Activated CD8-positive, alpha-beta memory T cell treated with anti-CD3 and anti-CD28 coated beads, Interleukin-2, amount 10 ng/mL, durations not matched to agents 7 days and 5 days (primary cell): ENCODE measurements at regions of chr2 and their contacts with region 1.

Region 1: GRCh38 chr2:43595603-43596412 is at the start of gene THADA:
- DNase-seq: peak; percentile 100
- ATAC-seq: peak; percentile 98
- H3K4me3 Mint-ChIP-seq: peak within 1 kb of the TSS; percentile 93
- H3K27ac Mint-ChIP-seq: peak within 1 kb of the TSS; percentile 95
- H3K4me1 Mint-ChIP-seq: peaks cover 41% of the 10 kb centered on the region
- H3K27me3 Mint-ChIP-seq: no peaks in the 10 kb centered on the region
- total RNA-seq, gene THADA: 32.0 to 32.1 TPM

Region 2: DNA sequence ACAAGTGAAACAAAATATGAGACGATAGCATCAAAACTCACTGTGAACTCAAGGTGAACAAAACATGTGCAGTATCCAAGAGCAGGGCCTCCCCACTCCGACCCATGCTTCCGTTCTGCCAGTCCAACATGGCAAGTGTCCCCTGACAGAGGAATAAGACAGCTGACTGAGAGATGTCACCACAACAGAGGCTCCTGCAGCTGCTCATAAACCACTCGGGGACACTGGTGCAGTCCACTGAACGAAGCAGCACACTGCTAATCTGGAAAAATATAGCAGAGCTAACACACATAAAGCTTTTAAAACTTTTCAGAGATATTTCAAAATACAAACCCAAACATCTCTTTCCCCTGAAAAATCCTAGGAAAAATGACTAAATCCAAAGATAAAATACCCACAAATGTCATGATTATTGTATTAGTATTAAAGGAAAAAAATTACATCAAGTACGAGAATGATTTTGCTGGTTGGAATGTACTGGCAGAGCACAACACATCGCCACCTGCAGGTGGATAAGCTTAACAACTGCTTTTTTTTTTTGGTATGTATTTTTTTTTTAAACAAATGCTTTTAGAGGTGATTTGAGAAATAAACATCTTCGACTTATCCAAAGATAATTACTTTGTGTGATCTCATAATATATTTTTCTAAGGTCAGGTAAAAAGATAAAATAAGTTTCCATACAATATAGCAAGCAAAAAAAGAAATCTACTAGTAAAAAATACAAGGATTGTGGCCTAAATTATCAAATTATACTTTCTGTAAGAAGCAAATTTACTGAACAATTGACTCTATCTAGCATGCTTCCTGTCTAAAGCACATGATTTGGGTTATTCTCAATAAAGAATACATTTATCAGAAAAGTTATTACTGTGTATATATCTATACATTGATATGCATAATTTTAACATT is 18.6 kb before region 1 on chr2:
- CTCF ChIA-PET with region 1: interaction called, 24 read pairs
- DNase-seq: no peak
- ATAC-seq: no peak
- H3K4me3 Mint-ChIP-seq: no peak overlapping the region
- H3K27ac Mint-ChIP-seq: peak overlapping the region; percentile 24
- H3K4me1 Mint-ChIP-seq: peaks cover 34% of the 10 kb centered on the region
- H3K27me3 Mint-ChIP-seq: no peaks in the 10 kb centered on the region

Region 3: DNA sequence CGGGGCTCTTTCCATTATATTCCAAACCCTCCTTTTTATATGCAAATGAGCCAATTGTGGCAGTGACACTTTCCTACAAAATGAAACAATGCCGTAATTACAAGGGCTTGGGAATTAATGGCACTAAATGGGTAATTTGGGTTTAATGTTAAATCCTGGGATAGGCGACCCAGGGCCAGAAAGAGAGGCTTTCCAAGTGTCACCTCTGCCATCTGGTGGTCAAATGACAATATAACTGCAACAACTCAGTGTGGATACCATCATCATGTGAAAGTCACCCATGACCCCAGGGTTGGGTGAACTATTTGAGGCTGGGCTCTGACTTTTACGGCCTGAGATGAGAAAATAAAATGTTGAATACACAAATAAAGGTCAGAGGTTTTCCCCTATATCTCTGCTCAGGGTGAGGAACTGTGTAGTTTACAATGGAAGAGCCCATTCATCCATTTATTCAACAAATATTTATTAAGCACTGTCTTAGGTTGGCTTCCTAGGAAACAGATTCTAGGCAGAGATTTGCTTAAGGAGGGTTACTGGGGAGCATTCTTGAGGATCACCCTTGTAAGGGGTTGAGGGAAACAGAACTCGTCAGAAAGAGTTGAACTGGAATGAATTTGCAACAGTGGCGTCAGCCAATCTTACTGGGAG is 13.6 kb after region 1 on chr2:
- CTCF ChIA-PET with region 1: interaction called, 21 read pairs
- DNase-seq: peak; percentile 53
- ATAC-seq: peak; percentile 63
- H3K4me3 Mint-ChIP-seq: no peak overlapping the region
- H3K27ac Mint-ChIP-seq: no peak overlapping the region
- H3K4me1 Mint-ChIP-seq: peaks cover 7% of the 10 kb centered on the region
- H3K27me3 Mint-ChIP-seq: peaks cover 4% of the 10 kb centered on the region